IMR-90 (cell line): ENCODE measurements at regions of chr2 and their contacts with region 1.

Region 1: GRCh38 chr2:231463698-231464575 is at the start of gene NCL:
- DNase-seq: peak; percentile 98
- ATAC-seq: peak; percentile 66
- H3K4me3 ChIP-seq: peak within 1 kb of the TSS; percentile 92
- H3K27ac ChIP-seq: peak within 1 kb of the TSS; percentile 99
- H3K4me1 ChIP-seq: peaks cover 2% of the 10 kb centered on the region; the same call in 1 of the 2 replicates
- H3K27me3 ChIP-seq: no peaks in the 10 kb centered on the region
- CTCF ChIP-seq: no peak
- POLR2A ChIP-seq: peak; percentile 99
- RAD21 ChIP-seq: no peak
- total RNA-seq, gene NCL: 289 and 506 TPM in 2 replicates

Region 2: DNA sequence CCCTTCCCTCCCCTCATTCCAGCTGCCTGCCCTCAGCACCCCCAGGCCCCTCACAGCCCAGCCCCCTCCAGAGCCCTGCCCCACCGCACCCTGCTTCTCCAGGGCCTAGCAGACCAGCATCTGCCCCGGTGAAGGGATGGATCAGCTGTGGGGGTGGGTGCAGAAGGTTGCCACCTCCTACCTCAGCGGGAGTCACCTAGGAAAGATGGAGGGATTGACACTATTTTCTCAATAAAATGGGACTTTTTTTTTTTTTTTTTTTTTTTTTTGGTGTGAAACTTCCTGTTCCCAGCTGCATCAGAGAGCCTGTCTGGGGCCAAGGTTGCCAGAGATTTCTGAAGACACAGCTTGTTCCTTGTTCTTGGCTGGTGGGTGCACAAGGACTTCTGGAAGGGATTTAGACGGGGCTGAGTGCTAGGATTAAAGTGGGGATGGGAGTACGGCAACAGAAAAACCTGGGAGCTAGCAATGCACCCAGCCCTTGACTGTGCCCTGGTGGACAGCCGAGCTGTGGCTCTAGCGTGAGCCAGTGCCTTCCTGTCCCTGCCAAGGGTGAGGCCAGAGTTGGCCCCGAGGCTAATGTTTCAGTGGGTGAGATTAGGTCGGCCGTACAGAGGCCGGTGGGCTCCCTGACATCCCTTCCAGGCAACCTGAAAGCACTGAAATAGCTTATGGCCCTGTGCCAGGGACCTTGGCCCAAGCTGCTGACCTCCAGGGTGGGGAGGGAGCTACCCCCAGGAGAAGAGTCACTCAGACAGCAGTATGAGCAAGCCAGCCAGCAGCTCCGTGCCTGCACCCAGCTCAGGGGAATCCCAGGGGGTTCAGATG is 63.9 kb before region 1 on chr2:
- CTCF ChIA-PET with region 1: no interaction called
- POLR2A ChIA-PET with region 1: interaction called, 17 read pairs
- dilution Hi-C with region 1: no loop called
- in situ Hi-C with region 1: no loop called
- intact Hi-C with region 1: no loop called
- DNase-seq: no peak
- ATAC-seq: peak; percentile 45
- H3K4me3 ChIP-seq: no peak overlapping the region
- H3K27ac ChIP-seq: no peak overlapping the region
- H3K4me1 ChIP-seq: peaks cover 8% of the 10 kb centered on the region
- H3K27me3 ChIP-seq: peaks cover 15% of the 10 kb centered on the region
- CTCF ChIP-seq: no peak
- POLR2A ChIP-seq: no peak
- RAD21 ChIP-seq: no peak

Region 3: GRCh38 chr2:231557571-231558237 is 93.8 kb after region 1 on chr2:
- CTCF ChIA-PET with region 1: no interaction called
- POLR2A ChIA-PET with region 1: no interaction called
- dilution Hi-C with region 1: no loop called
- in situ Hi-C with region 1: no loop called
- intact Hi-C with region 1: loop called (anchors 1 kb)
- DNase-seq: peak; percentile 81
- ATAC-seq: peak; percentile 95
- H3K4me3 ChIP-seq: no peak overlapping the region
- H3K27ac ChIP-seq: no peak overlapping the region
- H3K4me1 ChIP-seq: peaks cover 8% of the 10 kb centered on the region; the same call in 1 of the 2 replicates
- H3K27me3 ChIP-seq: no peaks in the 10 kb centered on the region
- CTCF ChIP-seq: peak; percentile 82
- POLR2A ChIP-seq: no peak
- RAD21 ChIP-seq: peak; percentile 84